ENCODE measurements at regions of chr22 and their contacts with region 1.

Region 1: DNA sequence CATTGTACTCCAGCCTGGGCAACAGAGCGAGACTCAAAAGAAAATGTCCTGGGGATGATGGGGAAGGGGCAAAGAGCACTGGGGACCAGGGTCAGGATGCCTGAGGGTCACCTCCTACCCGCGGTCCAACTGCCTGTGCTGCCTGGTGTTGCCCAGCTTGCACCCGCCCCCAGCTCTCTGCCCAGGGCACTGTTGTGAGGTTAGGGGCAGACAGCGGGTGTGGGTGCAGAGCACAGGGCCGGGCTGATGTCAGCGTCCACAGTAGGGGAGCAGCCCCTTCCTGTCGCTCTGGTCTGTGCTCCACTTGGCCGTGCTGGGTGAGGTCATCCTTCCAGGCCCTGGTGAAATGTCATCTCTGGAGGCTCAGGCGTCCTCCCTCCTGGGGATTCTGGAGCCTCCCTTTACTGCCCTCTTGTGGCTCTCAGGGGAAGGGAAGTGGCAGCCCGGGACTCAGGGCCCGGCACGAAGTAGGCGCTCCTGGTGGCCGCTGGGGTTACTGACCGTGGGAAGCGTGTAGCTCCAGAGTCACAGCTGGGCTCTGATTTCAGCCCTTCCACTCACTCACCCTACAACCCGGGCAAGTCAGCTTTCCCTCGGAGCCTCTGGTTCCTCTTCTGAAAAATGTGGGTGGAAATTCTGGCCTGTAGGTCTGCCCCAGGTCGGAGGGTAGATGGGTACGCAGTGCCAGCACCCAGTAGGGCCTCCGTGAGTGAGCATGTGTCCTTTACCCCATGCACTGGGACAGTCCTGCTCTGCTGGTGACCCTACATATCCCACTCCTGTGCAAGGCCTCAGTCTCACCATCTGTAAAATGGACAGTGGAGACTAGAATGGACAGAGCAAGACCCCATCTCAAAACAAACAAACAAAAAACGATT is 17.3 kb upstream of the PRR5 start:
- DNase-seq: peak; percentile 78 to 90
- ATAC-seq: peak; percentile 93 to 96
- H3K4me3 ChIP-seq: peak overlapping the region; percentile 22; the same call in 1 of the 3 replicates
- H3K27ac ChIP-seq: peak overlapping the region; percentile 65 to 69
- H3K4me1 ChIP-seq: peaks cover 39% of the 10 kb centered on the region
- CTCF ChIP-seq: peak; percentile 67
- EP300 ChIP-seq: no peak
- POLR2A ChIP-seq: no peak
- RAD21 ChIP-seq: peak; percentile 52 to 53; a peak in 4 of 5 replicates

Region 2: DNA sequence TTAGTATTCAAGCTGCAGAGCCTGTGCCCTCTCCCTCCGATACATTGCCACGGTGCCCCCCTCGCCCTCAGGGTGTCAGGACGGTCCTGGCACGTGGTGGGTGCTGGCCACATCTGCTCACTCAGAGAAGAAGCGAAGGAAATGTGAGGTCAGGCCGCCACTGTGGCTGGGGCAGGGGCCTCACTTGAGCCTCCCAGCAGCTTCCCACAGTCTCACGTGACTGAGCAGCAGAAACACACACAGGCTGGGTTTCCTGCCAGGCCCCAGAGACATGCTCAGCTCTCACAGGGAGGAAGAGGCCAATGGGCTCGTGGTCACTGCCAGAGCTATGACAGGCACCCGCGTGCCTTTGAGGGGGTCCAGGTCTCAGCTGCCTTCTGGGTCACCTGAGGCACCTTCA is 20.6 kb before region 1 on chr22:
- CTCF ChIA-PET with region 1: interaction called, 15 read pairs
- POLR2A ChIA-PET with region 1: no interaction called
- DNase-seq: no peak
- ATAC-seq: no peak
- H3K4me3 ChIP-seq: no peak overlapping the region
- H3K27ac ChIP-seq: no peak overlapping the region
- H3K4me1 ChIP-seq: peaks cover 1% of the 10 kb centered on the region; the same call in 2 of the 3 replicates
- CTCF ChIP-seq: no peak
- EP300 ChIP-seq: no peak
- POLR2A ChIP-seq: no peak
- RAD21 ChIP-seq: no peak

Region 3: DNA sequence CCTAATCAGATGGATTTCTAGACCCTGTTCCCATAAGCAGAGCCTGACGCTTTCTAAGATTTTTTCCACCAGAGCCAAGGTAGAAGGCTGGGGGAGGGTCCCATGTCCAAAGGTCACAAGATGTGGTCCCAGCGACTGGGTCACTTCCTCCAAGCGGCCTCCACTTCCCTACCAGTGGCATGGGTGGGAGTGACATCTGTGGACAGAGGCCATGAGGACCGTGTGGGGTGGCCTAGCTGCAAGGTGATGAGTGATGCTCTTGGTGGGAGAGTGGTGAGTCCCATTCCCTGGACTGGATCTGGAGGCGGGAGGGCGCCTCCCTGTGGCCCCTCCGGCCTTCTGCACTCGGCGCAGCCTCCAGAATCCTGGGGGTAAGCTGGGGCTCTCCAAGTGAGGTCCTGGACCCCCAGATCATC is 15.2 kb before region 1 on chr22:
- CTCF ChIA-PET with region 1: interaction called, 15 read pairs
- POLR2A ChIA-PET with region 1: no interaction called
- DNase-seq: peak; percentile 14 to 41
- ATAC-seq: peak; percentile 31 to 80; a peak in 4 of 6 replicates
- H3K4me3 ChIP-seq: peak overlapping the region; percentile 72; the same call in 2 of the 3 replicates
- H3K27ac ChIP-seq: peak overlapping the region in 1 of 2 experiments; percentile 96; a peak in 3 of 6 replicates
- H3K4me1 ChIP-seq: peaks cover 9% of the 10 kb centered on the region; the same call in 2 of the 3 replicates
- CTCF ChIP-seq: peak; percentile 21; the same call in 2 of the 3 replicates
- EP300 ChIP-seq: no peak
- POLR2A ChIP-seq: no peak
- RAD21 ChIP-seq: peak in 1 of 2 experiments; percentile 22; a peak in 1 of 5 replicates

Region 4: DNA sequence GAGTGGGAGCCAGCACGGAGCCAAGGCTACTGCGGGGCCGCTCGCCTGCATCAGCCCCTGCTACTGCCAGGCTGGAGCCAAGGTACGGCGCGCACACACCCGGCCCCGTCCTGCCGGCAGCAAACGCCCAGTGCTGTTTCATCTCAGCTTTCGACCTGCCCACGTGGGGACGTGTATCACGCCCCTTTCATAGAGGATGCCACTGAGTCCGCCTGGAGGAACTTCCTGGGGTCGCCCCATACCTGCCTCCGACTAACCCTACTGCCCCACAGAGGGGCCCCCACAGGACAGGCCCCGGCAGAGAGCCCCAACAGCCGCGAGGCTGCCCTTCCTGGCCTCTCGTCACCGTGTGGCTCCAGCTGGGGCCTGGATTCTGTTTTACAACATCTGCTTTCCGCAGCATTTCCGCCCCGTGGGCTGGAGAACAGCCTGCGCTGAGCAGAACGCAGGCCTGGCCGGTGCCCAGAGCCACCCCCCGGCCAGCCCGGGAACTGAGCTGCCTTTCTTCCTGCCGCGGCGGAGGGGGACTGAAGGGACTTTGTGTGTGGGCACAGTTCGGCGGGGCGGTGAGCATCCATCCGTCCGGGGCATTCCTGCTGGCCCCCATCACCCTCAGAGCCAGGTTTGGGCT is 44.8 kb after region 1 on chr22:
- CTCF ChIA-PET with region 1: interaction called, 10 read pairs
- POLR2A ChIA-PET with region 1: no interaction called
- DNase-seq: no peak
- ATAC-seq: no peak
- H3K4me3 ChIP-seq: no peak overlapping the region
- H3K27ac ChIP-seq: no peak overlapping the region
- H3K4me1 ChIP-seq: no peaks in the 10 kb centered on the region
- CTCF ChIP-seq: no peak
- EP300 ChIP-seq: no peak
- POLR2A ChIP-seq: no peak
- RAD21 ChIP-seq: no peak